Sigmoid colon (tissue), 7 donors: ENCODE measurements at regions of chr17 and their contacts with region 1.

Region 1: DNA sequence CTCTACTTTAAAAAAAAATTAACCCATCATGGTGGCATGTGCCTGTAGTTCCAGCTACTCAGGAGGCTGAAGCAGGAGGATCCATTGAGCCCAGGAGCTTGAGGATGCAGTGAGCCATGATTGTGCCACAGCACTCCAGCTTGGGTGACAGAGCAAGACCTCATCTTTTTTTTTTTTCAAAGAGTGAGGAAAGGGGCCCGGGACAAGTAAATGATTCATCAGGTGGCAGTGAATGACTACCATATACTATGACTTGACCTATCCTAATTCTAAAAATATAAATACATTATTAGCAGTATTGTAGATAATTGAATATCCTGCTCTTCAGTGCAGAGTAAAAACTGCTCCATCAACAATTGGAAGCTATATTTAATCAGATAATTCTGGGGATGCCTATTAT is 55.3 kb downstream of the CLUH start:
- DNase-seq: no peak
- H3K4me3 ChIP-seq: no peak overlapping the region
- H3K27ac ChIP-seq: no peak overlapping the region
- H3K4me1 ChIP-seq: peaks cover 0 to 23% (median 17%) of the 10 kb centered on the region in 4 donors
- H3K27me3 ChIP-seq: no peaks in the 10 kb centered on the region
- CTCF ChIP-seq: no peak
- EP300 ChIP-seq: no peak
- POLR2A ChIP-seq: no peak

Region 2: DNA sequence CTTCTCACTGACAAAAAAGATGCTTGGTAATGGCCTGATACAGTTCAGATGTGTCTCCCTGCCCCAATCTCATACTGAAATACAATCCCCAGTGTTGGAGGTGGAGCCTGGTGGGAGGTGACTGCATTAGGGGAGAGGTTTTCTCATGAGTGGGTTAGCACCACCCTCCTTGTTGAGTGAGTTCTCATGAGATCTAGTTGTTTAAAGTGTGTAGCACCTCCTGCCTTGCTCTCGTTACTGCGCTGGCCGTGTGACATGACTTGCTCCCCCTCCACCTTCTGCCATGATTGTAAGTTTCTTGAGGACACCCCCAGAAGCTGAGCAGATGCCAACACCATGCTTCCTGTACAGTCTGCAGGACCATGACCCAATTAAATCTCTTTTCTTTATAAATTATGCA is 325.0 kb before region 1 on chr17:
- intact Hi-C with region 1: no loop called
- DNase-seq: no peak
- H3K4me3 ChIP-seq: no peak overlapping the region
- H3K27ac ChIP-seq: no peak overlapping the region
- H3K4me1 ChIP-seq: peaks cover 0 to 18% (median 13%) of the 10 kb centered on the region in 4 donors
- H3K27me3 ChIP-seq: no peaks in the 10 kb centered on the region
- CTCF ChIP-seq: no peak
- EP300 ChIP-seq: no peak
- POLR2A ChIP-seq: no peak

Region 3: GRCh38 chr17:2602597-2603017 is 53.7 kb before region 1 on chr17:
- intact Hi-C with region 1: loop called (anchors 10 kb)
- DNase-seq: no peak
- H3K4me3 ChIP-seq: no peak overlapping the region
- H3K27ac ChIP-seq: peak overlapping the region in 1 of 4 donors; percentile 24
- H3K4me1 ChIP-seq: peaks cover 0 to 84% (median 69%) of the 10 kb centered on the region in 4 donors
- H3K27me3 ChIP-seq: no peaks in the 10 kb centered on the region
- CTCF ChIP-seq: no peak
- EP300 ChIP-seq: no peak
- POLR2A ChIP-seq: no peak

Region 4: DNA sequence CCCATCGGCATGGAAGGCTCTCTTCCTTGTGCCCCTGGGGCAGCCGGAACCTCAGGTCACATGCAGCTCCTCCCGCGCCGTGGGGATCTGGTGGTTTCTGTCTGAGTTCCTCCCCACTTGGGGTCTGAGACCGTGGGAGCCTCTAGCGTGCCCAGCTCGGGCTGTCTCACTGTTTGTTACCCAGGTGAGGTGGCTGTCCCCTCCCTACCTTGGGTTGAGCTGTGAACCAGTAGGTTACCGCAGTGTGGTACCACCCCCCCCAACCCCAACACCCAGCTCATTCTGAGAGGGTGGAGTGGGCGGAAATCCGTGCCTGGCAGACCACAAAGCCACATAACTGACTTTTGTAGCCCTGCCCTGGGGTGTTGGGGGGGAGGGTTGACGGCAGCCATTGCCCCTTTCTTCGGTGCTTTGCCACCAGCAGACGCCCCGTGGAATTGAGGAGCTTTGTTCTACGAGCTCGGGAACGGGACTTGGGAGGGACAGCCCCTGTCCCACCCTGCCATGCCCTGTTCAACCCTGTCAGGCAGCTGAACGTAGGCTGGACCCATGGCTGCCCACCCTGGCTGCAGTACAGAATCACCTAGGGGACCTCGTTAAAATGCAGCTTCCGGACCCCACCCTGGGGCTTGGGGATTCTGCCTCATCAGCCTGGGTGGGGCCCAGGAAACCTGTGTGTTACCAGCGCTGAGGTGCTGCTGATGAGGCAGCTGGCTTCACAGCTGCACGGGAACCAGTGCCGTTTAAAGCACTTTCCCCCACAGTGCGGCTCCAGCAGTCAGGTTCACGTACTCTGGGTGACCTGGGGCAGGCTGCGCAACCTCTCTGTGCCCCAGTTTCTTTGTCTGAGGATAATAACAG is 158.4 kb after region 1 on chr17:
- intact Hi-C with region 1: no loop called
- DNase-seq: no peak
- H3K4me3 ChIP-seq: peak overlapping the region in 1 of 4 donors; percentile 7
- H3K27ac ChIP-seq: no peak overlapping the region
- H3K4me1 ChIP-seq: no peaks in the 10 kb centered on the region
- H3K27me3 ChIP-seq: no peaks in the 10 kb centered on the region
- CTCF ChIP-seq: no peak
- EP300 ChIP-seq: no peak
- POLR2A ChIP-seq: no peak